ENCODE measurements at regions of chr12 and their contacts with region 1.

Region 1: GRCh38 chr12:91687052-91688017 is 458.3 kb downstream of the BTG1 start:
- DNase-seq: no peak
- H3K4me3 Mint-ChIP-seq: no peak overlapping the region
- H3K27ac Mint-ChIP-seq: peak overlapping the region; percentile 66
- H3K4me1 Mint-ChIP-seq: peaks cover 24% of the 10 kb centered on the region
- H3K27me3 Mint-ChIP-seq: no peaks in the 10 kb centered on the region

Region 2: GRCh38 chr12:91561958-91562875 is 125.1 kb before region 1 on chr12:
- intact Hi-C with region 1: loop called (anchors 5 kb)
- DNase-seq: no peak
- H3K4me3 Mint-ChIP-seq: no peak overlapping the region
- H3K27ac Mint-ChIP-seq: no peak overlapping the region
- H3K4me1 Mint-ChIP-seq: peaks cover 35% of the 10 kb centered on the region
- H3K27me3 Mint-ChIP-seq: no peaks in the 10 kb centered on the region

Region 3: DNA sequence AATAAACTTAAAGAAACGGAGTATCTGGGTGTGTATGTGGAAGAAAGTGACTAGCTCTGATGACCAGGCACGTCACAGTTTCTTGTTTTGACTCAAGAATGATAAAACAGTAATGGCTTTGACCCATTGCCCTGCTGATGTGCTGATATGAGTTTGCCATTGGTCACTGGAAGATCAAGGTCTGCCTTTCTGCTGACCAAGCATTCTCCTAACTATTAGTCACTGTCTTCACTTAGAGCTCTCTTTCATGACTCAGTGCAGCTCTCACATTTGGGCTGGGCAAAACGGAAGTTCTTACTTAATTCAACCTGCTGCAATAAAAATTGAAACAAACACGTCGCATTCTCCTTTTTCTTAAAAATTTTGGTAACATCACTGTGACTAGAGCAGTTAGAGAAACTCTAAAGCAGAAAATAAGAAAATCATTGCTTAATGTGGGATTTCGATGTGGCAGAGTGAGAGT is 91.6 kb after region 1 on chr12:
- intact Hi-C with region 1: loop called (anchors 2 kb)
- DNase-seq: peak; percentile 17
- H3K4me3 Mint-ChIP-seq: peak overlapping the region; percentile 62
- H3K27ac Mint-ChIP-seq: peak overlapping the region; percentile 70
- H3K4me1 Mint-ChIP-seq: peaks cover 24% of the 10 kb centered on the region
- H3K27me3 Mint-ChIP-seq: peaks cover 4% of the 10 kb centered on the region

Region 4: DNA sequence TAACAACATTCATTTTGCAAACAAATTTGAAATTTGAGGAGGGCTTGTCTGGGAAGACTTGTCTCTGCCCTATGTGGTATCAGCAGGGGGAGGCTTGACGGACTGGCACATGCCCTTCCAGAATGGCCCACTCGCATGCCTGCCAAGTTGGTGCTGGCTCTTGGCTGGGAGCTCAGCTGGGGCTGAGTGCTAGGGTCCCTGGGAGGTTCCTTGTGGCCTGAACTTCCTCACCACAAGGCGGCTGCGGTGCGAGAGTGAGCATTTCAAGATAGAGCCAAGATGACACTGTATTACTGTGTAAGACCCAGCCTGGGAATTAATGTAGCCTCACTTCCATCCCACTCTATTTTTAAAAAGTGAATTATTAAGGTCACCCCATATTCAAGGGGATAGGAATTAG is 743.8 kb after region 1 on chr12:
- intact Hi-C with region 1: no loop called
- DNase-seq: no peak
- H3K4me3 Mint-ChIP-seq: no peak overlapping the region
- H3K27ac Mint-ChIP-seq: no peak overlapping the region
- H3K4me1 Mint-ChIP-seq: peaks cover 18% of the 10 kb centered on the region
- H3K27me3 Mint-ChIP-seq: no peaks in the 10 kb centered on the region

Region 5: DNA sequence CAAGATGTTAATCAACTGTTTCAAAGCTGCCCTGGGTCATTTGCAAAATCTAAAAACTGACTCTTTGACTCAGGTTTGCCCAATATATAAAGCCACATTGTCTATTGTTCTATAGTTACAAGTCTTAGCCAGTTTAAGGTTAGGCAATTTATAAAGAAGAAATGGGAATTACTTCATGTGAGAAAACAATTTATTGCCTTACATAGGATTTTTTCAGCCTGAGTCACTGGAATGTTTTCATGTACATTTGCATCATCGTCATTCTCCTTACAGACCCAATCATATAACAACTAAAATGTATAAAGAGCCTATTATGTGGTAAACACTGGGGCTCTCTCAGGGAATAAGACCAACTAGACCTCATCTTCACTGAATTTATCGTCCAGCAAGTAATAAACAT is 915.1 kb after region 1 on chr12:
- intact Hi-C with region 1: loop called (anchors 5 kb)
- DNase-seq: no peak
- H3K4me3 Mint-ChIP-seq: no peak overlapping the region
- H3K27ac Mint-ChIP-seq: peak overlapping the region; percentile 34
- H3K4me1 Mint-ChIP-seq: peaks cover 33% of the 10 kb centered on the region
- H3K27me3 Mint-ChIP-seq: no peaks in the 10 kb centered on the region